Left lung (tissue), 14 donors: ENCODE measurements at regions of chr6 and their contacts with region 1.

Region 1: GRCh38 chr6:105992315-105992961 is 93.7 kb upstream of the PRDM1 start:
- DNase-seq: peak; percentile 81 to 96 (median 88)
- ATAC-seq: peak; percentile 96
- H3K4me3 ChIP-seq: peak overlapping the region; percentile 52 to 72
- H3K27ac ChIP-seq: peak overlapping the region in 1 of 2 donors; percentile 21
- H3K4me1 ChIP-seq: peaks cover 0 to 33% of the 10 kb centered on the region in 2 donors
- H3K27me3 ChIP-seq: peaks cover 77 to 96% of the 10 kb centered on the region in 2 donors
- CTCF ChIP-seq: no peak

Region 2: GRCh38 chr6:106069478-106069877 is 77.0 kb after region 1 on chr6:
- intact Hi-C with region 1: no loop called
- DNase-seq: peak in 1 of 4 donors; percentile 51
- ATAC-seq: no peak
- H3K4me3 ChIP-seq: no peak overlapping the region
- H3K27ac ChIP-seq: no peak overlapping the region
- H3K4me1 ChIP-seq: no peaks in the 10 kb centered on the region
- H3K27me3 ChIP-seq: peaks cover 0 to 3% of the 10 kb centered on the region in 2 donors
- CTCF ChIP-seq: no peak

Region 3: DNA sequence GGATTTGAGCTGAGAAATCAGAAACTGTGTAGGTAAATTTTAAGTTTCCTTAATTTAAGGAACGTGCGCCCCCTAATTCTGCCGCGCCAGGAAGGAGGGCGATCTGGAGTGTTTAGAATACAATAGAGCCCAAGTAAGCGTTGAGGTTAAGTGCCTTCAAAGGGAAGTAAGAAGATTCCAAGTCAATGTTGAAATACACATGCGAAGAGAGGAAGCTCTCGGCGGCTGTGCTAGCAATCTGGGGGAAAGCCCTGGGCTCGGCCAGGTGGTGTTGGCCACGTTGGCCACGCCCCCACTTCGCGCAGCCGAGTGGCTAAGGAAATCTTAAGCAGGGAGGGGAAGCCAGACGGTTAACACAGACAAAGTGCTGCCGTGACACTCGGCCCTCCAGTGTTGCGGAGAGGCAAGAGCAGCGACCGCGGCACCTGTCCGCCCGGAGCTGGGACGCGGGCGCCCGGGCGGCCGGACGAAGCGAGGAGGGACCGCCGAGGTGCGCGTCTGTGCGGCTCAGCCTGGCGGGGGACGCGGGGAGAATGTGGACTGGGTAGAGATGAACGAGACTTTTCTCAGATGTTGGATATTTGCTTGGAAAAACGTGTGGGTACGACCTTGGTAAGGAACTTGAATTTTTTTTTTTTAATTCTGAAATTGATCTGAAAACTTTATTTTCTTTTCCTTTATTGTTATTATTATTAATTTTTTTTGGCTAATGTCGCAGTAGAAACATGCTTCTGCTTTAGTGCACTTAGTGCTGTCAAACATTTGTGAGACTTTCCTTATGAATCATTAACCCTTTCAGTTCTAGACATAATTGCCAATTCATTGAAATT is 93.8 kb after region 1 on chr6 and contains the start of gene PRDM1:
- intact Hi-C with region 1: loop called in 1 of 2 experiments (anchors 10 kb)
- DNase-seq: peak in 3 of 4 donors; percentile 71 to 96 (median 93)
- ATAC-seq: peak; percentile 94
- H3K4me3 ChIP-seq: peak within 1 kb of the TSS; percentile 37 to 51
- H3K27ac ChIP-seq: peak within 1 kb of the TSS; percentile 69 to 87
- H3K4me1 ChIP-seq: peaks cover 0 to 71% of the 10 kb centered on the region in 2 donors
- H3K27me3 ChIP-seq: peaks cover 0 to 53% of the 10 kb centered on the region in 2 donors
- CTCF ChIP-seq: no peak
- polyA plus RNA-seq, gene PRDM1: 5.5 to 9.9 (median 7.7) TPM

Region 4: DNA sequence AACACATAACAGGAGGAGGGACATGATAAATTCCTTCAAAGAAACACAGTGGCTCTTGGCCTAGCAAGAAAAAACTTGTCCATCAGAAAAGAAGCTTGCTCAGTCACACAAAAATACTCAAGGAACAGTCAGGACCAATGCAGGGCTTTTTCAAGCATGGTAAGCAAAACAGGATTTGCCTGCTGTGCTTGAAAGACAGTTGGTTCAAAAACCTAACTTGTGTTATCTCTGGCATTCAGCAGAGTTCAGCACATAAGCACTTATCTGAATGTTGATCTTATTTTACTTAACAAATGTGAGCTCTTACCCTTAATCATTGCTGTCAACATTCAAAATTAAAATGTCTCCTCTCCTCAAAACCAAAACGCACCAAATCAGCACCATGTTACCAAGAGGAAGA is 294.8 kb after region 1 on chr6:
- intact Hi-C with region 1: no loop called
- DNase-seq: no peak
- ATAC-seq: no peak
- H3K4me3 ChIP-seq: no peak overlapping the region
- H3K27ac ChIP-seq: no peak overlapping the region
- H3K4me1 ChIP-seq: no peaks in the 10 kb centered on the region
- H3K27me3 ChIP-seq: no peaks in the 10 kb centered on the region
- CTCF ChIP-seq: no peak

Region 5: GRCh38 chr6:106397431-106397830 is 405.0 kb after region 1 on chr6:
- intact Hi-C with region 1: no loop called
- DNase-seq: no peak
- ATAC-seq: no peak
- H3K4me3 ChIP-seq: no peak overlapping the region
- H3K27ac ChIP-seq: no peak overlapping the region
- H3K4me1 ChIP-seq: no peaks in the 10 kb centered on the region
- H3K27me3 ChIP-seq: no peaks in the 10 kb centered on the region
- CTCF ChIP-seq: no peak